Breast epithelium (tissue), 4 donors: ENCODE measurements at regions of chr1 and their contacts with region 1.

Region 1: DNA sequence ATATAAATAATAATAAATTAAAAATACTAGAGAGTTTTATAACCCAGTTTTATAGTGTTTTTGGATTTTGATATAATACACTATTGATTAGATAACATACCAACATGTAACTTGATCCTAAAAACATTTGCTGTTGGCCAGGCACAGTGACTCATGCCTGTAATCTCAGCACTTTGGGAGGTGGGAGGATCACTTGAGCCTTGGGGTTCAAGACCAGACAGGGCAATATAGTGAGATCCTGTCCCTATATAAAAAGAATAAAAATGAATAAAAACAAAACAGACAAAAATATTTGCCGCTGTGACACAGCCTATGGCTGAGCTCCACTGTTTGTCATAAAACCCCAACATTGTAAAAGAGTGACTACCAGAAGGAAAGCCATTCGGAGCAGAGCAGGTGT is 26.1 kb downstream of the VPS13D start:
- DNase-seq: no peak
- H3K4me3 ChIP-seq: no peak overlapping the region
- H3K27ac ChIP-seq: no peak overlapping the region
- H3K4me1 ChIP-seq: no peaks in the 10 kb centered on the region
- H3K27me3 ChIP-seq: no peaks in the 10 kb centered on the region
- CTCF ChIP-seq: no peak
- POLR2A ChIP-seq: no peak

Region 2: DNA sequence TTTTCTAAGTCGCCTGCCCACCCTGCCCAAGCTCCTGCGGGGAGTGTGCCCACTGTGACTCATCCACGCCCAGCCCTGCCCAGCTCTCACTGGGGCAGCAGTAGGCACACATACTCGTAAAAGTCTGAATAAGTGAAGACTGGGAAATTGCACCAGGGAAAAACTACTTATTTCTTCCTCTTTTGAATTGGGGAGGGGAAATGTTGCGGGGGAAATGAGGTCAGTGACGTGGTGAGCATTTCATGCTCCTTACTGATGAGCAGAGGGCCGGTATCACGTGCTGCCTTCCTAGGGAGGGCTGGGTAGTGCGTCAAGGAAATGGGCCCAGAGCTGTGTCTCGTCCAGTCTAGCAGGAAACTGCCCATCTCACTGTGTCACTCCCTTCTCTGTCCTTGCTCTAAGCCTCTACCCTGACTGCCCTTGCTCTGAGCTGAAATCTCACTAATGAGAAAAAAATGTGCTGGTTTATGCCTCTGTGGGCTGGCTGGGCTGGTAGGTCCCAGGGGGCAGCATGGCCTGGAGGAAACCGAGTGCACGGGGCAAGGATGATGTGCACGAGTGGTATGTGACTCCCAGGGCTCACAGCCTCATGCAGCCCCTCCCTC is 102.6 kb before region 1 on chr1:
- intact Hi-C with region 1: no loop called
- DNase-seq: no peak
- H3K4me3 ChIP-seq: no peak overlapping the region
- H3K27ac ChIP-seq: peak overlapping the region in 1 of 2 donors; percentile 75
- H3K4me1 ChIP-seq: no peaks in the 10 kb centered on the region
- H3K27me3 ChIP-seq: no peaks in the 10 kb centered on the region
- CTCF ChIP-seq: no peak
- POLR2A ChIP-seq: no peak

Region 3: DNA sequence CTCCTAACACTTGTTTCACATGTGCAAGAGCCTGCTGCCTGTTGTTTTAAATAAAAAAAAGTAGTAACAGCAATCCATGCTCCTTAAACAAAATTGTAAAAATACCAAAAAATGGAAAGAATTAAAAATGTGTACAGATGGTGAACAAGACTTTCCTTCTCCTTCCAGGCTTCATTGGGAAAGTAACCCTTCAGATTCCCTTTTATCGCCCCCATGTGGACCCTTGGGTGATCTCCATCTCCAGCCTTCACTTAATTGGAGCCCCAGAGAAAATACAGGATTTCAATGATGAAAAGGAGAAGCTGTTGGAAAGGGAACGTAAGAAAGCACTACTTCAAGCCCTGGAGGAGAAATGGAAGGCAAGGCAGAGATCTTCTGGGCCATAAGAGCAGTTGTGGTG is 11.8 kb before region 1 on chr1:
- intact Hi-C with region 1: loop called (anchors 1 kb)
- DNase-seq: no peak
- H3K4me3 ChIP-seq: no peak overlapping the region
- H3K27ac ChIP-seq: peak overlapping the region; percentile 45 to 73
- H3K4me1 ChIP-seq: no peaks in the 10 kb centered on the region
- H3K27me3 ChIP-seq: no peaks in the 10 kb centered on the region
- CTCF ChIP-seq: peak in 1 of 3 donors; percentile 13
- POLR2A ChIP-seq: no peak

Region 4: DNA sequence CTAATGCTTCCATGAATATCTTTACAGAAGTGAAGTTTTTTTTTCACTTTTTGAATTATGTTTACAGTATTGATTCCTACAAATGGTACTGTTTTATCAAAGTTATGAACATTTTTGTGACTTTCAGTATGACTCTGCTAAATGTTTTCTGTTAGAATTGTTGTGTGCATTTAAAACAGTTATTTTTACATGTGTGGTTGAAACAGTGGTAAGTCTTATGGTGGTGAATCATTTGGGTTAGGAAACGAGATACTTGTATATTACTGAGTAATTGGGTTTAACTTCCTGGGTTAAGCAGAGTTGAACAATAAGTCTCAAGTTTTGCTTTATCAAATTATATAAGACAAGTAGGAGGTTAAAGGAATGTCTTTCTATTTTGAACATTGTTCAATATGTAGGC is 40.7 kb after region 1 on chr1:
- intact Hi-C with region 1: no loop called
- DNase-seq: no peak
- H3K4me3 ChIP-seq: no peak overlapping the region
- H3K27ac ChIP-seq: no peak overlapping the region
- H3K4me1 ChIP-seq: no peaks in the 10 kb centered on the region
- H3K27me3 ChIP-seq: no peaks in the 10 kb centered on the region
- CTCF ChIP-seq: no peak
- POLR2A ChIP-seq: no peak

Region 5: GRCh38 chr1:12447849-12448312 is 192.0 kb after region 1 on chr1:
- intact Hi-C with region 1: no loop called
- DNase-seq: peak in 1 of 2 donors; percentile 56
- H3K4me3 ChIP-seq: no peak overlapping the region
- H3K27ac ChIP-seq: peak overlapping the region; percentile 83 to 93
- H3K4me1 ChIP-seq: peaks cover 6 to 44% of the 10 kb centered on the region in 2 donors
- H3K27me3 ChIP-seq: no peaks in the 10 kb centered on the region
- CTCF ChIP-seq: no peak
- POLR2A ChIP-seq: no peak

Region 6: DNA sequence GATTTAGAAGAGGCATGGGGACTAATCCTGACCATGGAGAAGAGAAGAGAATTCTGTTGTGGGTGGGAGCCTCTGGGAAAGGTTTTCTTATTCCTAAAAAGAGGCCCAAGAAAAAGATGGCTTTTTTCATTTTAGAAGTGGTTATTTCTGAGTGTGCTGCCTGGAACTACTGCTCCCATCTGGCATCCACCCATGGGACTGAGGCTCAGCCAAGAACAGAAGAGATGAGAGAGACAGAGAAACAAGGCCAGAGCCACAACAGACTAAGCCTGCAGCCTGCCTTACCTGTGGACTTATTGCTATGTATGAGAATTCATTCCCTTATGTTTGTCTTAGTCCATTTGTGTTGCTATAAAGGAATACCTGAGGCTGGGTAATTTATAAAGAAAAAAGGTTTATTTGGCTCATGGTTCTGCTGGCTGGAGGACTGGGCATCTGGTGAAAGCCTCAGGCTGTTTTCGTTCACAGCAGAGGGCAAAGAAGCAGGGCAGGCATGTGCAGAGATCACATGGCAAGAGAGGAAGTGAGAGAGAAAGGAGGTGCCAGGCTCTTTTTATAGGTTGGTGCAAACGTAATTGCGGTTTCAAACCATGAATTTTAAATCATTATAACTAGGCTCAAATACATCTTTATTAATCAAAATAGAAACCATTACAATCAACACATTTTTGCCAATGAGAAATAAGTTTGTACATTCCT is 1386.5 kb after region 1 on chr1:
- intact Hi-C with region 1: no loop called
- DNase-seq: no peak
- H3K4me3 ChIP-seq: no peak overlapping the region
- H3K27ac ChIP-seq: no peak overlapping the region
- H3K4me1 ChIP-seq: no peaks in the 10 kb centered on the region
- H3K27me3 ChIP-seq: no peaks in the 10 kb centered on the region
- CTCF ChIP-seq: no peak
- POLR2A ChIP-seq: no peak